ENCODE measurements at regions of chr5 and their contacts with region 1.

Region 1: GRCh38 chr5:31854181-31855133 is 215.5 kb downstream of the PDZD2 start:
- DNase-seq: peak; percentile 63
- H3K4me3 Mint-ChIP-seq: peak overlapping the region; percentile 79
- H3K27ac Mint-ChIP-seq: no peak overlapping the region
- H3K4me1 Mint-ChIP-seq: peaks cover 15% of the 10 kb centered on the region
- H3K27me3 Mint-ChIP-seq: peaks cover 20% of the 10 kb centered on the region

Region 2: GRCh38 chr5:31972558-31972957 is 118.1 kb after region 1 on chr5:
- CTCF ChIA-PET with region 1: interaction called, 3 read pairs
- intact Hi-C with region 1: loop called (anchors 10 kb)
- DNase-seq: no peak
- H3K4me3 Mint-ChIP-seq: no peak overlapping the region
- H3K27ac Mint-ChIP-seq: no peak overlapping the region
- H3K4me1 Mint-ChIP-seq: peaks cover 12% of the 10 kb centered on the region
- H3K27me3 Mint-ChIP-seq: no peaks in the 10 kb centered on the region

Region 3: GRCh38 chr5:32069396-32069795 is 214.9 kb after region 1 on chr5:
- CTCF ChIA-PET with region 1: no interaction called
- intact Hi-C with region 1: no loop called
- DNase-seq: no peak
- H3K4me3 Mint-ChIP-seq: no peak overlapping the region
- H3K27ac Mint-ChIP-seq: no peak overlapping the region
- H3K4me1 Mint-ChIP-seq: no peaks in the 10 kb centered on the region
- H3K27me3 Mint-ChIP-seq: no peaks in the 10 kb centered on the region

Measured in activated naive CD4-positive, alpha-beta T cell treated with anti-CD3 and anti-CD28 coated beads for 36 hours (primary cell).